Panc1 (cell line): ENCODE measurements at regions of chr19 and their contacts with region 1.

Region 1: GRCh38 chr19:39474139-39474622 is 6.5 kb upstream of the TIMM50 start:
- DNase-seq: no peak
- ATAC-seq: peak; percentile 75
- H3K4me3 ChIP-seq: no peak overlapping the region
- H3K27ac ChIP-seq: no peak overlapping the region
- H3K4me1 ChIP-seq: no peaks in the 10 kb centered on the region
- H3K27me3 ChIP-seq: no peaks in the 10 kb centered on the region
- CTCF ChIP-seq: no peak

Region 2: DNA sequence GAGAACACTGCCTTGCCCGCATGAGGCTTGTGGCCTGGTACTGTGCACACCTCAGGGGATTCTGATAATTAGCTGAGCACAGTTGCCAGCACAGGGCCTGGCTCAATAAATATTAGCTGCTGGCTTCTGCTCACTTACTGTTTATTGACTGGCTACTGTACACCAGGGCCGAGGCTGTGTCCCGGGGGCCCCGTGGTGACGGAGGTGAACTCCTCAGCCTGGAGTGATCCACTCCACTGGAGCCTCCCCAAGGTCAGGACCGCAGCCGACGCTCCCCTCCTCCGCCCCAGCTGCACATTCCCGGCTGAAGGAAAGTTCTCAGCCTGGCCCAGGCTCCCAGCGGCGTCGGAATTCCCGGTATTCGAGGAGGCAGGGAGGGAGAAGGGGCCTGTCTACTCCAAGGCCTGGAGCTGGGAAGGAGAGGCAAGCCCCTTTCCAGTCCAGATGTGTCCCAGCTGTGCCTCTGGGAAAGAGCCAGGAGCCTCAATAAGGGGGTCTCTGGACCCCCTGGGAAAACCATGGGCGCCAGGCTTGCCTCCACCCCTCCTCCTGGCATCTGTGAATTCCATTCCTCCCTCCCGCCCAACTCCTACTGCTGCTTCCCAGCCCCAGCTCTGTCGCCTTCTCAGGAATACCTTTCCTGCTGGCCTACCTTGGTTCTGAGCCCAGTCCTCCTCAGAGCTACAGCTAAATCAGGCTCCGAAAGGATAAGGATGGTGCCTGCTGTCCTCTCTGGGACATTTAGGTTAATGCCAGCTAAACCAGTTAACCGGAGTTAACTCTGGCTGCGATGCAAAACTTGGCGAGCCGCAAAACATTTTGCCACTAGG is 45.7 kb before region 1 on chr19:
- CTCF ChIA-PET with region 1: interaction called, 12 read pairs
- POLR2A ChIA-PET with region 1: interaction called, 5 read pairs
- in situ Hi-C with region 1: no loop called
- intact Hi-C with region 1: no loop called
- DNase-seq: peak; percentile 92
- ATAC-seq: peak; percentile 70
- H3K4me3 ChIP-seq: peak overlapping the region; percentile 0 to 17; a peak in 3 of 4 replicates
- H3K27ac ChIP-seq: peak overlapping the region; percentile 86
- H3K4me1 ChIP-seq: peaks cover 75% of the 10 kb centered on the region
- H3K27me3 ChIP-seq: no peaks in the 10 kb centered on the region
- CTCF ChIP-seq: no peak

Region 3: GRCh38 chr19:39463403-39463802 is 10.8 kb before region 1 on chr19:
- CTCF ChIA-PET with region 1: interaction called, 57 read pairs
- POLR2A ChIA-PET with region 1: interaction called, 16 read pairs
- in situ Hi-C with region 1: no loop called
- intact Hi-C with region 1: no loop called
- DNase-seq: no peak
- ATAC-seq: no peak
- H3K4me3 ChIP-seq: no peak overlapping the region
- H3K27ac ChIP-seq: no peak overlapping the region
- H3K4me1 ChIP-seq: no peaks in the 10 kb centered on the region
- H3K27me3 ChIP-seq: no peaks in the 10 kb centered on the region
- CTCF ChIP-seq: no peak

Region 4: DNA sequence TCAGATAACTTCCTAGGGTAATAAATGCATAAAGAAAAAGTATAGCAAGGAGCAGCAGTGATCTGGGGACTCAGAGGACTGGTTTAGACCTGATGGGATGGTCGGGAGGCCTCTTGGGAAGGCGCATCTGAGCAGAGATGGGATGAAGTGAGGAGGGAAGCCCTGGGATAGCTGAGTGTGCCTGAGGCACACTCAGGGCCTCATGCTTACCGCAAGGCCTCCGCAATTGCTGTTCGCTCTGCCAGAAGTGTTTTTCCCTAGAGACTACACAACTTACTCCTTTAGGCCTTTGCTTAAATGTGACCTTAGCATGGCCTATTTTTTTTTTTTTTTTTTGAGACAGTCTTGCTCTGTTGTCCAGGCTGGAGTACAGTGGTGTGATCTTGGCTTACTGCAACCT is 20.5 kb after region 1 on chr19:
- CTCF ChIA-PET with region 1: interaction called, 89 read pairs
- POLR2A ChIA-PET with region 1: interaction called, 6 read pairs
- in situ Hi-C with region 1: no loop called
- intact Hi-C with region 1: no loop called
- DNase-seq: no peak
- ATAC-seq: no peak
- H3K4me3 ChIP-seq: no peak overlapping the region
- H3K27ac ChIP-seq: no peak overlapping the region
- H3K4me1 ChIP-seq: peaks cover 20% of the 10 kb centered on the region
- H3K27me3 ChIP-seq: peaks cover 4% of the 10 kb centered on the region
- CTCF ChIP-seq: no peak

Region 5: DNA sequence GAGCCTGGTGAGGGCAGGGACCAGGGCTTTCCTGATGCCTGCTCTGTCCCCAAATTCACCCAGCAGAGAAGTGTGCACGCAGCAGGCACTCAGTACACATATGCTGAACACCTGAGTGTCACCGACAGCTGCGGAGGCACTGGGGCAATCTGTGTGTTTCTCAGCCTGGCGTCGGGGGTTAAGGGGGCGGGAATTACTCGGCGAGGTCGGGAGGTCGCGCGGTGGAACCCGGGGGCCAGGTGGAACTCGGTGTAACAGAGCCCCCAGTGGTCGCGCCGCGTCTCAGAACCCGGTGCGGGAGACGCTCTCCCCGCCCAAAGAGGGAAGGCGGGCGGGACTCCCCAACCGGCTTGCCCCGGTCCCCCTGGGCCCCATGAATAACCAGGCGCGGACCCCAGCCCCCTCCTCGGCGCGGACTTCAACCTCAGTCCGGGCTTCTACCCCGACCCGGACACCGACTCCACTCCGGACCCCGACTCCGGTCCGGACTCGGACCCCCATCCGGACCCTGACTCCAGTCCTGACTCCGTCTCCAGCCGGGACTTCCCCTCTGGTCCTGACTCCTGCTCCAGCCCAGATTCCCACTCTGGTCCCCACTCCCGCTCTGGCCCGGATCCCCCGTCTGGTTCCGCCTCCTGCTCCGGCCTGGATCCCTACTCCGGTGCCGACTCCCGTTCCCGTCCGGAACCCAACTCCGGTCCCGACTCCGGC is 40.8 kb after region 1 on chr19 and contains the start of gene SELENOV:
- CTCF ChIA-PET with region 1: interaction called, 37 read pairs
- POLR2A ChIA-PET with region 1: interaction called, 4 read pairs
- in situ Hi-C with region 1: no loop called
- intact Hi-C with region 1: no loop called
- DNase-seq: no peak
- ATAC-seq: peak; percentile 56
- H3K4me3 ChIP-seq: peak within 1 kb of the TSS; percentile 30 to 55
- H3K27ac ChIP-seq: peak within 1 kb of the TSS; percentile 5
- H3K4me1 ChIP-seq: peaks cover 26% of the 10 kb centered on the region
- H3K27me3 ChIP-seq: peaks cover 23% of the 10 kb centered on the region
- CTCF ChIP-seq: no peak
- total RNA-seq, gene SELENOV: 0.80 TPM

Region 6: GRCh38 chr19:39524495-39524894 is 50.3 kb after region 1 on chr19:
- CTCF ChIA-PET with region 1: interaction called, 37 read pairs
- POLR2A ChIA-PET with region 1: interaction called, 5 read pairs
- in situ Hi-C with region 1: no loop called
- intact Hi-C with region 1: no loop called
- DNase-seq: no peak
- ATAC-seq: peak; percentile 1; the same call in 1 of the 2 replicates
- H3K4me3 ChIP-seq: no peak overlapping the region
- H3K27ac ChIP-seq: no peak overlapping the region
- H3K4me1 ChIP-seq: peaks cover 3% of the 10 kb centered on the region; the same call in 1 of the 2 replicates
- H3K27me3 ChIP-seq: no peaks in the 10 kb centered on the region
- CTCF ChIP-seq: no peak

Region 7: DNA sequence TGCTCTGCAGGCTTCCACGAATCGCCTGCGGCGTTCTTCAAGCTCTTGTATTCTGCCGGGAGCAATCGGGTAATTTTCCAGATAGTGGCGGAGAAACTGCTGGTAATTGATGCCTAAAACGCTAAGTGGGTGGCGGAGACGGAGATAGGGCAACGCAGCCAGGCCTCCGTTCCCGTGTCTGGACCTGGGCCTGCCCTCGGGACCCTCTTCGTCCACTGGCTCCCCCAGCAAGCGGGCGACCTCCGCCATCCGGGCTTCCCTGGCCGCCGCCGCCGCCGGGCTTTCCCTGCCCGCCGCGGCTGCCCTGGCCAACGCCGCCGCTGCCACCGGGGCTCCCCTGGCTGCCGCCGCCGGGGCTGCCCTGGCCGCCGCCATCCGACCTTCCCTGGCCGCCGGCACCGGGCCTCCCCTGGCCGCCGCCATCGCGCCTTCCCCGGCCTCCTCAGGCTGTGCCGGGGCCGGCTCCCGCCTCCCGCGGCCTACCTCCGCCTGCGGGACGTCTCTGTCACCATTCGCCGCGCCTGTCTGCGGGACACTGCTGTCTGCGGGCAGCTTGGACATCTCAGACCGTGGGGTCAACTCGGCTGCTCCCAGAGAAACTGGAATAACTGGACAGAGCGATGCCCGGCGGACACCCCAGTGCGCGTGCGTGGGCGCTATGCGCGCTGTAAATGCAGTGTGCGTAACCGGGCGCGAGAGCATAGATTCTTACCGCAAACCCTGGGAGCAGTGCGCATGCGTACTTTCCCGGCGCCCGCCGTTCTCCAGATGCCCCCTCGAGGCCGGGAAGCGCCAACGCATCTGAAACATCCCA is 65.5 kb after region 1 on chr19 and contains the start of gene EID2:
- CTCF ChIA-PET with region 1: interaction called, 134 read pairs
- POLR2A ChIA-PET with region 1: interaction called, 7 read pairs
- in situ Hi-C with region 1: no loop called
- intact Hi-C with region 1: no loop called
- DNase-seq: peak; percentile 100
- ATAC-seq: peak; percentile 97
- H3K4me3 ChIP-seq: peak within 1 kb of the TSS; percentile 36 to 59
- H3K27ac ChIP-seq: peak within 1 kb of the TSS; percentile 78
- H3K4me1 ChIP-seq: peaks cover 26% of the 10 kb centered on the region
- H3K27me3 ChIP-seq: peaks cover 11% of the 10 kb centered on the region
- CTCF ChIP-seq: no peak
- total RNA-seq, gene EID2: 163 TPM

Region 8: GRCh38 chr19:39681416-39681815 is 207.2 kb after region 1 on chr19:
- CTCF ChIA-PET with region 1: no interaction called
- POLR2A ChIA-PET with region 1: no interaction called
- in situ Hi-C with region 1: no loop called
- intact Hi-C with region 1: no loop called
- DNase-seq: no peak
- ATAC-seq: no peak
- H3K4me3 ChIP-seq: no peak overlapping the region
- H3K27ac ChIP-seq: no peak overlapping the region
- H3K4me1 ChIP-seq: peaks cover 11% of the 10 kb centered on the region
- H3K27me3 ChIP-seq: peaks cover 57% of the 10 kb centered on the region
- CTCF ChIP-seq: no peak